ENCODE measurements at regions of chr9 and their contacts with region 1.

Region 1: DNA sequence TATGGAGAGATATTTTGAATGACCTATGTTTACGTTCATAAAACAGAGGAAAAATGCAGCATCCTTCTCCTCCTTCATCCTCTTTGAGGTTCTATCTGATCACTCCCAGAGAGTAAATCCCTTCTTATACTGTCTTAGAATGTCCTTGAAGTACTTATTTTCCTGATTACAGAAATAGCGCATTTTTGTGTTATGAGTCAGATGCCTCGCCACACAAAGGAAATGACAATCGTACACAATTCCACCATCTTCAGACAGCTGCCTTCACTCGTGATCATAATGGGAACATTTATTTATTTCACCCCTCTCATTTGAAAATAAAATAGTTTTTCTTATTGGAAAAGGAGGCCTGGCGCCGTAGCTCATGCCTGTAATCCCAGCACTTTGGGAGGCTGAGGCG is 2.4 kb upstream of the GLT6D1 start:
- DNase-seq: no peak
- ATAC-seq: no peak
- H3K4me3 ChIP-seq: no peak overlapping the region
- H3K27ac ChIP-seq: no peak overlapping the region
- H3K4me1 ChIP-seq: no peaks in the 10 kb centered on the region
- H3K27me3 ChIP-seq: no peaks in the 10 kb centered on the region
- CTCF ChIP-seq: no peak

Region 2: GRCh38 chr9:135574331-135574730 is 67.4 kb before region 1 on chr9:
- CTCF ChIA-PET with region 1: no interaction called
- POLR2A ChIA-PET with region 1: no interaction called
- in situ Hi-C with region 1: no loop called
- intact Hi-C with region 1: no loop called
- DNase-seq: no peak
- ATAC-seq: no peak
- H3K4me3 ChIP-seq: no peak overlapping the region
- H3K27ac ChIP-seq: no peak overlapping the region
- H3K4me1 ChIP-seq: no peaks in the 10 kb centered on the region
- H3K27me3 ChIP-seq: no peaks in the 10 kb centered on the region
- CTCF ChIP-seq: no peak

Region 3: DNA sequence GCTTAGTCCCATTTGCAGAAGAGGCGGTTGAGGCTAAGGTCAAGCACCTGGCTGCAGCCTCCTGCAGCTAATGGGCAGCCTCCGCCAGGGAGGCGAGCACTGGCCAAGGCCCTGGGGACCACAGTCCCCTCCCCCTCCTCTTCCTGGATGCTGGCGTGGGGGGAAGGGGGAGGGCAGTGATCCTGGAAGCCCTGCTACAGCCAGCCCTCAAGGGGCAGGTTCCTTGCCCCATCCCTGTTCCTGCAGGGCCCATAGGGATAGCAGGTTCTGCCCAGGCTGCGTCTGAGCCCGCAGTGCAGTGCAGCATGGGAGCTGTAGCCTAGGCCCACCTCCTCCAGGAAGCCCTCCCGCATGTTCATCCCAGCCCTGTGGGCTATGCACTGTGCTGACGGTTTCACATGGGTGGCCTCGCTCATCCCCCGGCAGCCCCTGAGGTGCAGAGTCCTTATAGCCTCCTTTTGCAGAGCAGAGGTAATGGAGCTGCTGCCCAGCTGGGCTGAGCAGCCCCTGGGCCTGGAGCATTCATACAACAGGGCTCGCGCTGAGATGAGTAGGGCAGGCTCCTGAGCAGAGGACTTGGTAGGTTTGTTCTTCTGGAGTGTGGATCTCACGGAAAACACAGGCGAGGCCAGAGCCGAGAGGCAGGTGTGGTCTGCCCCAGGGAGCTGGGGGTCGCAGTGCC is 96.2 kb after region 1 on chr9:
- CTCF ChIA-PET with region 1: no interaction called
- POLR2A ChIA-PET with region 1: interaction called, 10 read pairs
- in situ Hi-C with region 1: no loop called
- intact Hi-C with region 1: no loop called
- DNase-seq: no peak
- ATAC-seq: peak; percentile 51
- H3K4me3 ChIP-seq: no peak overlapping the region
- H3K27ac ChIP-seq: no peak overlapping the region
- H3K4me1 ChIP-seq: no peaks in the 10 kb centered on the region
- H3K27me3 ChIP-seq: no peaks in the 10 kb centered on the region
- CTCF ChIP-seq: no peak